ENCODE measurements at regions of chr15 and their contacts with region 1.

Region 1: GRCh38 chr15:34367101-34368081 is at the start of gene LPCAT4:
- DNase-seq: peak; percentile 59 to 87
- H3K4me3 ChIP-seq: peak within 1 kb of the TSS; percentile 71 to 96 (median 84)
- H3K27ac ChIP-seq: peak within 1 kb of the TSS; percentile 97
- H3K4me1 ChIP-seq: peaks cover 5 to 12% (median 7%) of the 10 kb centered on the region in 4 experiments
- H3K27me3 ChIP-seq: no peaks in the 10 kb centered on the region
- CTCF ChIP-seq: peak; percentile 71 to 87 (median 72)
- EP300 ChIP-seq: 0 out of 3 replicates have a peak, but pooled peaks of 1 of the 2 experiments have one; percentile 26
- POLR2A ChIP-seq: peak; percentile 82 to 93
- RAD21 ChIP-seq: peak; percentile 45 to 60
- total RNA-seq, gene LPCAT4: 69.3 and 72.4 TPM in 2 replicates

Region 2: DNA sequence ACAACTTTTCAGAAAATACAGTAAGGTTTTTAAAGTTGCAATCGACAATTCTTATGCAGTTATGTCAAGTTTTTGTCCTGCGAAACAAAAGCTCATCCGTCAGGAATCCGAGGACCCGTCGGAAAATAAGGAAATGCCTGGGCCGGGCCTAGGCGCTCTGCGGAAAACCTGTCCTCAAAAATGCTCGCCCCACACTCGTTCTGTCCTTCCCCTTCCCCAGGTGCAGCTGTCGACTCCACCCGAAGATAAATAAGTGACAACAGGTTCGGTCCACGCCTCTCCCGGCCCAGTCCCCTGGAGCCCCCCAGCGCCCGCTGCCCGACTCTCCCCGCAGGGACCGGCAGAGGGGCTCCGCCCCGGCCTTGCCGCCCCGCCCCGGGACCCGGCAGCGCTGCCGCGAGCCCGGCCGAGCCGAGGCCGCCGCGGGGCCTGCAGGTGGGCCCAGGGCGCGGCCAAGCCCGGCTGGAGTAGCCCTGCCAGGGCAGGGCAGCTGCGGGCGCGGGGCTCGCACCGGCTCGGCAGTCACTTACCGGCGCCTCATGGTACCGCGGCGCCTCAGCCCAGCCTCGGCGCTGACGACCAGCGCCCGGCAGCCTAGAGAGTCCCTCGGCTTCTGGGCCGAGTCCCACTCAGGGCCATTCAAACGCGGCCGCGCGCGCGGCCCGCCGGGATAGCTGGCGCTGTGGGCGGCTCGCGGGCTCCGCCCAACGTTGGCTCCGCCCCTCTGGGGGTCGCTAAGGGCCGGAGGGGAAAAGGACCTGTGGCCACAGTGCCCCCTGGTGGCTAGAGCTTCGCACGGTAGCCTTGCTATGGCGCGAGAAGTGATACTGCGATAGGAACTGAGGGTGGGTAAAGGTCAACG is 157.7 kb before region 1 on chr15 and contains the start of gene KATNBL1:
- CTCF ChIA-PET with region 1: interaction called, 3 read pairs
- POLR2A ChIA-PET with region 1: interaction called, 12 read pairs
- DNase-seq: peak; percentile 84 to 99
- H3K4me3 ChIP-seq: peak within 1 kb of the TSS; percentile 45 to 93 (median 73)
- H3K27ac ChIP-seq: peak within 1 kb of the TSS; percentile 84; the same call in 1 of the 2 replicates
- H3K4me1 ChIP-seq: peaks cover 5 to 16% (median 15%) of the 10 kb centered on the region in 4 experiments; a peak in 5 of 7 replicates
- H3K27me3 ChIP-seq: no peaks in the 10 kb centered on the region
- CTCF ChIP-seq: peak; percentile 87 to 94 (median 93)
- EP300 ChIP-seq: peak in 1 of 2 experiments; percentile 4; a peak in 1 of 3 replicates
- POLR2A ChIP-seq: peak; percentile 76 to 91
- RAD21 ChIP-seq: peak; percentile 85 to 91
- total RNA-seq, gene KATNBL1: 50.3 and 51.4 TPM in 2 replicates

Region 3: GRCh38 chr15:34337557-34338306 is 29.7 kb before region 1 on chr15 and contains the start of gene SLC12A6:
- CTCF ChIA-PET with region 1: interaction called, 34 read pairs
- POLR2A ChIA-PET with region 1: interaction called, 35 read pairs
- DNase-seq: peak; percentile 43 to 93
- H3K4me3 ChIP-seq: peak within 1 kb of the TSS; percentile 65 to 86 (median 74)
- H3K27ac ChIP-seq: peak within 1 kb of the TSS; percentile 84; the same call in 1 of the 2 replicates
- H3K4me1 ChIP-seq: peaks cover 0 to 4% (median 2%) of the 10 kb centered on the region in 4 experiments; a peak in 4 of 7 replicates
- H3K27me3 ChIP-seq: no peaks in the 10 kb centered on the region
- CTCF ChIP-seq: no peak
- EP300 ChIP-seq: no peak
- POLR2A ChIP-seq: peak in 1 of 2 experiments; percentile 58; a peak in 2 of 3 replicates
- RAD21 ChIP-seq: no peak
- total RNA-seq, gene SLC12A6: 11.1 and 11.3 TPM in 2 replicates

Region 4: DNA sequence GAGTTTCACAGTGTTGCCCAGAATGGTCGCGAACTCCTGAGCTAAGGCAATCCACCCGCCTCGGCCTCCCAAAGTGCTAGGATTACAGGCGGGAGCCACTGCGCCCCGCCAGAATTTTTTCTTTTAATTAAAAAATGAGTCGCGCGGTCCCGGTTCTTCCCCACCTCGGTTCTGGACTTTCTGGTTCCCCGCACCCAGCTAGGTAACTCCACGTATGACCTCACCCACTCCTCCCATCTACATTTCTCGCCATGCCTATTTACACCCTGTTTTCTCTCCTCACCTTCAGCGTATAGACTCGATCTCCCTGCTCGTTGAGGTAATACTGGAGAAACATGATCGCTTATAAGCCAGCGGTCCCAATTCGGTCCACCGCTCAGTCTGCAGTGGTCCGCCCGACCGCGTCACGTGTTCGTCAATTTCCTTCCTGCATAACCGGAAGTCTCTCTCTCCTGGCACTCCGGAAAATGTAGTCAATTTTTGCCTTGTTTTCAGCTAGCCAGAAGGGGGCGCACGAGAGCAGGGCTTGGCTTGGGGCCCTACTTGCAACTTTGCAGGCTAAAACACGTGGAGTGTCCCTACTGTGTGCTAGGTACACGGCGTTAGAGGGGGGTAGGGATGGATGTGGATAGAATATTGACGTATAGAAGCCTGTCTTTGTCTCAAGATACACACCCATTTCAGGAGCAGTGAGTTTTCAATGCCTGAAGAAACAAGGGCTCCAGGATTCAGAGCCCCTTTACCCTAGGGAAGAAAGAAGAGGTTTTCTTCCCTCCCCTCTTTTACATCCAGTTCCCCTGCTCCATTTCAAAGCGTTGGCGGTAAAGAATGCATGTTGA is 24.4 kb before region 1 on chr15 and contains the starts of genes NOP10 and NUTM1:
- CTCF ChIA-PET with region 1: interaction called, 34 read pairs
- POLR2A ChIA-PET with region 1: interaction called, 35 read pairs
- DNase-seq: peak; percentile 98 to 99
- H3K4me3 ChIP-seq: peak within 1 kb of the TSS; percentile 86 to 94 (median 92)
- H3K27ac ChIP-seq: peak within 1 kb of the TSS; percentile 88
- H3K4me1 ChIP-seq: peaks cover 4 to 11% (median 8%) of the 10 kb centered on the region in 4 experiments; a peak in 6 of 7 replicates
- H3K27me3 ChIP-seq: no peaks in the 10 kb centered on the region
- CTCF ChIP-seq: peak; percentile 77 to 99 (median 87)
- EP300 ChIP-seq: peak in 1 of 2 experiments; percentile 87; a peak in 1 of 3 replicates
- POLR2A ChIP-seq: peak; percentile 39 to 87
- RAD21 ChIP-seq: peak; percentile 80 to 84
- total RNA-seq, gene NOP10: 285 and 297 TPM in 2 replicates
- total RNA-seq, gene NUTM1: 0.60 and 0.61 TPM in 2 replicates

Measured in H1 (cell line).